Natural killer cell (primary cell): ENCODE measurements at regions of chr2 and their contacts with region 1.

Region 1: GRCh38 chr2:161223139-161223732 is 63.0 kb downstream of the TANK start:
- DNase-seq: peak in 1 of 2 donors; percentile 74
- ATAC-seq: peak; percentile 69 to 81 (median 74)
- H3K4me3 ChIP-seq: no peak overlapping the region
- H3K4me3 Mint-ChIP-seq: no peak overlapping the region
- H3K27ac ChIP-seq: no peak overlapping the region
- H3K27ac Mint-ChIP-seq: no peak overlapping the region
- H3K4me1 ChIP-seq: no peaks in the 10 kb centered on the region
- H3K4me1 Mint-ChIP-seq: no peaks in the 10 kb centered on the region
- H3K27me3 ChIP-seq: no peaks in the 10 kb centered on the region
- H3K27me3 Mint-ChIP-seq: no peaks in the 10 kb centered on the region
- CTCF ChIP-seq: peak; percentile 92

Region 2: GRCh38 chr2:161116509-161116908 is 106.7 kb before region 1 on chr2:
- intact Hi-C with region 1: no loop called
- DNase-seq: no peak
- ATAC-seq: no peak
- H3K4me3 ChIP-seq: no peak overlapping the region
- H3K4me3 Mint-ChIP-seq: no peak overlapping the region
- H3K27ac ChIP-seq: no peak overlapping the region
- H3K27ac Mint-ChIP-seq: no peak overlapping the region
- H3K4me1 ChIP-seq: no peaks in the 10 kb centered on the region
- H3K4me1 Mint-ChIP-seq: no peaks in the 10 kb centered on the region
- H3K27me3 ChIP-seq: no peaks in the 10 kb centered on the region
- H3K27me3 Mint-ChIP-seq: peaks cover 15 to 20% of the 10 kb centered on the region in 2 donors
- CTCF ChIP-seq: no peak

Region 3: DNA sequence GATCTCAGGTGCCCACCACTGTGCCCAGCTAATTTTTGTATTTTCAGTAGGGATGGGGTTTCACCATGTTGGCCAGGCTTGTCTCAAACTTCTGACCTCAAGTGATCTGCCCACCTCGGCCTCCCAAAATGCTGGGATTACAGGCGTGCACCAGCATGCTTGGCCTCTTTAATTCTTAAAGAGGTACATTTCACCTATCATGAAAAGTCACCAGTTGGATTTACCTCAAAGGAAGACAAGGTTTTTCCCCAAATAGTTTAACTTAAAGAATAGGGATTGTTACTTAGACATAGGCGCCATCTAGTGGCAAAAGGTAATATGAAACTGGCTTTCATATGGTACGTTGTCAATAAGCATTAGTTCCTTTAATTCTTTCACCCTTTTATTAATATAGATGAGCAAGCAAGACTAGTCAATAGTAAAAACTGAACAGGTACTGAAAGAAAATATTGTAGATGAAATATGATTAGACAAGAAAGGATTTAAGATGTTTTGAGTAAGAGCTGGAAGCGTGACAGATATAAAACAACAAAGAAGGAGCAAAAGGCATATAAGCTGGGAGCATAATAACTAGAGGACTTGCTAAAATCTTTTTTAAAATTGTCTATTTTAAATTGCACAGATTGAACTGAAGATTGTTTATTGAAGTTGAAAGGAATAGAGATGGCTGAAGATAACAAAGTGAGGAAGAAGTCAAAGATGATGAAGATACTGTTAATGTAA is 50.0 kb after region 1 on chr2:
- intact Hi-C with region 1: loop called (anchors 1 kb)
- DNase-seq: peak in 1 of 2 donors; percentile 83
- ATAC-seq: peak in 2 of 3 donors; percentile 64 to 65
- H3K4me3 ChIP-seq: no peak overlapping the region
- H3K4me3 Mint-ChIP-seq: no peak overlapping the region
- H3K27ac ChIP-seq: no peak overlapping the region
- H3K27ac Mint-ChIP-seq: no peak overlapping the region
- H3K4me1 ChIP-seq: no peaks in the 10 kb centered on the region
- H3K4me1 Mint-ChIP-seq: peaks cover 4 to 6% of the 10 kb centered on the region in 2 donors
- H3K27me3 ChIP-seq: peaks cover 10% of the 10 kb centered on the region
- H3K27me3 Mint-ChIP-seq: peaks cover 12 to 27% of the 10 kb centered on the region in 2 donors
- CTCF ChIP-seq: peak; percentile 93

Region 4: GRCh38 chr2:162123806-162124758 is 900.8 kb after region 1 on chr2:
- intact Hi-C with region 1: loop called (anchors 5 kb)
- DNase-seq: peak in 1 of 2 donors; percentile 85
- ATAC-seq: peak; percentile 72 to 79 (median 74)
- H3K4me3 ChIP-seq: no peak overlapping the region
- H3K4me3 Mint-ChIP-seq: no peak overlapping the region
- H3K27ac ChIP-seq: no peak overlapping the region
- H3K27ac Mint-ChIP-seq: no peak overlapping the region
- H3K4me1 ChIP-seq: no peaks in the 10 kb centered on the region
- H3K4me1 Mint-ChIP-seq: no peaks in the 10 kb centered on the region
- H3K27me3 ChIP-seq: no peaks in the 10 kb centered on the region
- H3K27me3 Mint-ChIP-seq: no peaks in the 10 kb centered on the region
- CTCF ChIP-seq: peak; percentile 95